CD8-positive, alpha-beta T cell (primary cell): ENCODE measurements at regions of chr2 and their contacts with region 1.

Region 1: GRCh38 chr2:108583903-108584520 is 49.7 kb downstream of the LIMS1 start:
- DNase-seq: peak; percentile 6 to 76 (median 52)
- ATAC-seq: peak; percentile 92
- H3K4me3 ChIP-seq: no peak overlapping the region
- H3K4me3 Mint-ChIP-seq: peak overlapping the region; percentile 27
- H3K27ac ChIP-seq: no peak overlapping the region
- H3K27ac Mint-ChIP-seq: no peak overlapping the region
- H3K4me1 ChIP-seq: peaks cover 5% of the 10 kb centered on the region
- H3K4me1 Mint-ChIP-seq: peaks cover 15% of the 10 kb centered on the region
- H3K27me3 ChIP-seq: no peaks in the 10 kb centered on the region
- H3K27me3 Mint-ChIP-seq: no peaks in the 10 kb centered on the region
- CTCF ChIP-seq: peak; percentile 68

Region 2: DNA sequence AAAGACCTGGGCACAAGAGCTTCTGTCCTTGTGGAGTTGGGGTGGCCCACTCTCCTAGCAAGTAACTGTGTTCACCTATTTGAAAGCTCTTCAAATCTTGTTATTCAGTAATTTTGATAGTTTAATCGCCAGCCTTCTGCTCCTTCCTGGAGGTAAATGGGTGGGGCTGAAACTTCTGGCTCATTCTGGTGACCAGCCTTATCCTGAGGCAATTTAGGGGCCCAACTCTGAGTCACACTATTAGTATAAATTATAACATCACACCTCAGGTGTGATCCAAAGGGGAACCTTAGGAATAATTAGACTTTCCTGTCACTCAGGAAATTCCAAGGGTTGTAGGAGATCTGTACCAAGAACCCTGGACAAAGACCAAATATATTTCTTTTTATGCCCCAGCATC is 1013.1 kb before region 1 on chr2:
- CTCF ChIA-PET with region 1: no interaction called
- POLR2A ChIA-PET with region 1: no interaction called
- intact Hi-C with region 1: loop called in 1 of 2 experiments (anchors 5 kb)
- DNase-seq: no peak
- ATAC-seq: no peak
- H3K4me3 ChIP-seq: no peak overlapping the region
- H3K4me3 Mint-ChIP-seq: no peak overlapping the region
- H3K27ac ChIP-seq: no peak overlapping the region
- H3K27ac Mint-ChIP-seq: no peak overlapping the region
- H3K4me1 ChIP-seq: no peaks in the 10 kb centered on the region
- H3K4me1 Mint-ChIP-seq: no peaks in the 10 kb centered on the region
- H3K27me3 ChIP-seq: no peaks in the 10 kb centered on the region
- H3K27me3 Mint-ChIP-seq: no peaks in the 10 kb centered on the region
- CTCF ChIP-seq: no peak

Region 3: DNA sequence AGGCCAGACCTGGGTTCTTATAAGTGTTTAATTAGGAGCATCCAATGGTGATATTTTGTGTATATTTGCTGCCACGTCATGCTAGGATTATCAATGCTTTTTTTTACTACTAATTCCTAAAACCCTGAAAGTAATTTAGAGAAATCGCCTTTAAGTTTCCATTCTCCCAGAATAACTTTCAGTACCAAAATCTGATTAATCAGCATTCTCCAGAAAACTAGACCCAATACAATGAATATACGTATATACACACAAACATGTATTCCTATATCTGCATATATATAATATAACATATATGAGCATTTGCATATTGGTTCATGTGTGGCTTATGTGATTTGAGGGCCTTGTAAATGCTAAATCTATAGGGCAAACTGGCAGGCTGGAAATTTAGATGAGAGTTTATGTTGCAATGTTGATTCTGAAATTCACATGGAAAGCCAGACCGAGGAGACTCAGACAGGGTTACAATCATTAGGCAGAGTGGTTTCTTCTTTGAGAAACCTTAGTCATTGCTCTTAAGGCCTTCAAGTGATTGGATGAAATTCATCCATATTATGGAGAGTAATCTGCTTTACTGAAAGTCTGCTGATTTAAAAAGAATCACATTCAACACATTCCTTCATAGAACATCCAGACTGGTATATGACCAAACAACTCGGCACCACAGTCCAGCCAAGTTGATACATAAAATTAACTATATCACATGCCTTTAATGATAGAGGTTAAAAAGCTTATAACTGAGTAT is 823.2 kb before region 1 on chr2:
- CTCF ChIA-PET with region 1: no interaction called
- POLR2A ChIA-PET with region 1: no interaction called
- intact Hi-C with region 1: no loop called
- DNase-seq: no peak
- ATAC-seq: no peak
- H3K4me3 ChIP-seq: no peak overlapping the region
- H3K4me3 Mint-ChIP-seq: no peak overlapping the region
- H3K27ac ChIP-seq: no peak overlapping the region
- H3K27ac Mint-ChIP-seq: no peak overlapping the region
- H3K4me1 ChIP-seq: no peaks in the 10 kb centered on the region
- H3K4me1 Mint-ChIP-seq: no peaks in the 10 kb centered on the region
- H3K27me3 ChIP-seq: no peaks in the 10 kb centered on the region
- H3K27me3 Mint-ChIP-seq: no peaks in the 10 kb centered on the region
- CTCF ChIP-seq: no peak

Region 4: GRCh38 chr2:108215794-108216211 is 368.2 kb before region 1 on chr2:
- CTCF ChIA-PET with region 1: no interaction called
- POLR2A ChIA-PET with region 1: no interaction called
- intact Hi-C with region 1: loop called in 1 of 2 experiments (anchors 10 kb)
- DNase-seq: no peak
- ATAC-seq: no peak
- H3K4me3 ChIP-seq: no peak overlapping the region
- H3K4me3 Mint-ChIP-seq: no peak overlapping the region
- H3K27ac ChIP-seq: no peak overlapping the region
- H3K27ac Mint-ChIP-seq: no peak overlapping the region
- H3K4me1 ChIP-seq: no peaks in the 10 kb centered on the region
- H3K4me1 Mint-ChIP-seq: no peaks in the 10 kb centered on the region
- H3K27me3 ChIP-seq: no peaks in the 10 kb centered on the region
- H3K27me3 Mint-ChIP-seq: peaks cover 6% of the 10 kb centered on the region
- CTCF ChIP-seq: no peak

Region 5: GRCh38 chr2:108396845-108397244 is 187.2 kb before region 1 on chr2:
- CTCF ChIA-PET with region 1: interaction called, 6 read pairs
- POLR2A ChIA-PET with region 1: no interaction called
- intact Hi-C with region 1: loop called in 1 of 2 experiments (anchors 5 kb)
- DNase-seq: peak in 2 of 9 experiments; percentile 5
- ATAC-seq: no peak
- H3K4me3 ChIP-seq: no peak overlapping the region
- H3K4me3 Mint-ChIP-seq: no peak overlapping the region
- H3K27ac ChIP-seq: no peak overlapping the region
- H3K27ac Mint-ChIP-seq: no peak overlapping the region
- H3K4me1 ChIP-seq: no peaks in the 10 kb centered on the region
- H3K4me1 Mint-ChIP-seq: no peaks in the 10 kb centered on the region
- H3K27me3 ChIP-seq: no peaks in the 10 kb centered on the region
- H3K27me3 Mint-ChIP-seq: peaks cover under 1% of the 10 kb centered on the region
- CTCF ChIP-seq: no peak

Region 6: GRCh38 chr2:108492364-108492763 is 91.6 kb before region 1 on chr2:
- CTCF ChIA-PET with region 1: no interaction called
- POLR2A ChIA-PET with region 1: no interaction called
- intact Hi-C with region 1: loop called in 1 of 2 experiments (anchors 5 kb)
- DNase-seq: no peak
- ATAC-seq: no peak
- H3K4me3 ChIP-seq: no peak overlapping the region
- H3K4me3 Mint-ChIP-seq: no peak overlapping the region
- H3K27ac ChIP-seq: no peak overlapping the region
- H3K27ac Mint-ChIP-seq: no peak overlapping the region
- H3K4me1 ChIP-seq: no peaks in the 10 kb centered on the region
- H3K4me1 Mint-ChIP-seq: peaks cover 5% of the 10 kb centered on the region
- H3K27me3 ChIP-seq: no peaks in the 10 kb centered on the region
- H3K27me3 Mint-ChIP-seq: no peaks in the 10 kb centered on the region
- CTCF ChIP-seq: no peak

Region 7: GRCh38 chr2:108594132-108594981 is 10.3 kb after region 1 on chr2:
- CTCF ChIA-PET with region 1: interaction called, 18 read pairs
- POLR2A ChIA-PET with region 1: no interaction called
- intact Hi-C with region 1: no loop called
- DNase-seq: no peak
- ATAC-seq: peak; percentile 33
- H3K4me3 ChIP-seq: no peak overlapping the region
- H3K4me3 Mint-ChIP-seq: no peak overlapping the region
- H3K27ac ChIP-seq: no peak overlapping the region
- H3K27ac Mint-ChIP-seq: no peak overlapping the region
- H3K4me1 ChIP-seq: peaks cover 7% of the 10 kb centered on the region
- H3K4me1 Mint-ChIP-seq: peaks cover 25% of the 10 kb centered on the region
- H3K27me3 ChIP-seq: no peaks in the 10 kb centered on the region
- H3K27me3 Mint-ChIP-seq: no peaks in the 10 kb centered on the region
- CTCF ChIP-seq: no peak

Region 8: GRCh38 chr2:108776475-108776874 is 192.5 kb after region 1 on chr2:
- CTCF ChIA-PET with region 1: no interaction called
- POLR2A ChIA-PET with region 1: no interaction called
- intact Hi-C with region 1: no loop called
- DNase-seq: no peak
- ATAC-seq: no peak
- H3K4me3 ChIP-seq: no peak overlapping the region
- H3K4me3 Mint-ChIP-seq: no peak overlapping the region
- H3K27ac ChIP-seq: no peak overlapping the region
- H3K27ac Mint-ChIP-seq: no peak overlapping the region
- H3K4me1 ChIP-seq: no peaks in the 10 kb centered on the region
- H3K4me1 Mint-ChIP-seq: no peaks in the 10 kb centered on the region
- H3K27me3 ChIP-seq: no peaks in the 10 kb centered on the region
- H3K27me3 Mint-ChIP-seq: no peaks in the 10 kb centered on the region
- CTCF ChIP-seq: no peak

Region 9: DNA sequence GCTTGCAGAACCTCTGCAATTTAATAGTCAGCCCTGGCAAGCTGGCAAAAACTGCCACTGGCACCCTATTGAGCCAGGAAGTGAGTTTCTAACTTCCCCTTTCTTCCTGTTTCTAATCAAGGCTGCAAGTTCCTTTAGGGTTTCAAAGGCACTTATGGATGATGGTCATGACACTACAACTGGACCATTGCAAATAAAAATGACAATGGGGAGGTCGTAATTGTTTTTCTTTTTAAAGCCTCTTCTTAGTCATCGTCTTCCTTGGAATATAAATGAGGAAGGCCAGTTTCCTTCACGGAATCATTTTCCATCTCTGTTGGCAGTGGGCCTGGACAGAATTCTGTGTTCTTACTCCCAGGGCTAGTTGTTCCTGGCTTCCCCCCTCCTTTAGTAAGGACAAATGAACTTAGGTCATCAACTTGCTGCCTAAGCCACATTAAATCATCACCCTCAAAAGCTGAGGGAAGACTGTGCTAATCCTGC is 580.8 kb after region 1 on chr2:
- CTCF ChIA-PET with region 1: no interaction called
- POLR2A ChIA-PET with region 1: no interaction called
- intact Hi-C with region 1: no loop called
- DNase-seq: no peak
- ATAC-seq: no peak
- H3K4me3 ChIP-seq: no peak overlapping the region
- H3K4me3 Mint-ChIP-seq: no peak overlapping the region
- H3K27ac ChIP-seq: no peak overlapping the region
- H3K27ac Mint-ChIP-seq: no peak overlapping the region
- H3K4me1 ChIP-seq: peaks cover 4% of the 10 kb centered on the region
- H3K4me1 Mint-ChIP-seq: peaks cover 43% of the 10 kb centered on the region
- H3K27me3 ChIP-seq: no peaks in the 10 kb centered on the region
- H3K27me3 Mint-ChIP-seq: no peaks in the 10 kb centered on the region
- CTCF ChIP-seq: no peak